Sciatic nerve (tissue), 2 donors: ENCODE measurements at regions of chr4 and their contacts with region 1.

Region 1: DNA sequence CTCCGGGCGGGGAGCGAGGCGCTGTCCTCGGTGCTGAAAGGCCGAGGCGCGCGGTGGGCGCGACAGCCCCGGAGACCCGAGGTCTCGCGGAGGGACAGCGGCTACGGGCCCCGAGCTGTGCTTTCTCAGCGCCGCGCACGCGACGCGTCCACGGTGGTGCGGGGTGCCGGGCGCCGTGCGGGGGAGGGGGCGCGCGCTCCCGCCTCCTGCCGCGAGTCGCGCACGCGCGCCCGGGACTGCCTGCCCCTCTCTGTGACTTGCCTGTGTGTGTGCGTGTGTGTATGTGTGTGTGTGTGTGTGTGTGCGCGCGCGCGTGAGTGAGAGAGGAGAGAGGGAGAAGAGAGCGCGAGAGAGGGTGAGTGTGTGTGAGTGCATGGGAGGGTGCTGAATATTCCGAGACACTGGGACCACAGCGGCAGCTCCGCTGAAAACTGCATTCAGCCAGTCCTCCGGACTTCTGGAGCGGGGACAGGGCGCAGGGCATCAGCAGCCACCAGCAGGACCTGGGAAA is at the start of gene GRIA2:
- DNase-seq: peak; percentile 68
- ATAC-seq: peak; percentile 75
- total RNA-seq, gene GRIA2: 16.6 TPM

Region 2: DNA sequence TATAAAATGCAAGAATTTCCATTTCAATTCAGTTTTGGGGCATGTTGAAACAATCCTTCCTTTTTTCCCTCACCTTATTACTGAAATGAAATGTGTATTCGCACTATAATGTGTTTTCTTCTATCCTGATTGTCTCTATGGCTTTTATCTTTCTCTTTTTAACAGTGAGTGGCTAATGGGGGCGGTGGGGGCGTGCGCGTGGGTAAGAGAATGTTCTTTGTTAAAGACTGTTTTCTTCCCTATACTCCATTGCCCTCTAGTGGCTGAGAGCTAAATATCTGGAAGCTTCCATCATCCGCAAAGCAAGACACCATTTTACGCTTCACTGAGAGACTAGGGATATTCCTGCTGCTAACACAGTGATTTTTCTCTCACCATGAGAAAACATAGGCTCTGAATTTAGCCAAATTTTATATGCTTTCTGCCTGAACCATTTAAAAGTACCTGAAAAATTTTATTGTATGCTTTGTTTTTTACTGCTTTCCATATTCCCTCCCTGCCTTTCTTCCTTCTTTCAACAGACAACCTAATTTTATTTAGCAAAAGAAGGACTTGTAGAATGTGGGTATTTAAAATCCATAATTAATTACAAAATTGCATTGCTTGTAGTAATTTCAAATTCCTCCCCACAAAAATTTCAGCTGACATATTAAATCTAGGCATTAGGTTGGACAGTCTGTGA is 758.4 kb after region 1 on chr4:
- intact Hi-C with region 1: loop called (anchors 5 kb)
- DNase-seq: peak; percentile 69
- ATAC-seq: peak; percentile 87